ENCODE measurements at regions of chr16 and their contacts with region 1.

Region 1: GRCh38 chr16:27639561-27640276 is 89.8 kb downstream of the KATNIP start:
- DNase-seq: peak; percentile 10
- H3K4me3 ChIP-seq: no peak overlapping the region
- CTCF ChIP-seq: peak; percentile 79

Region 2: DNA sequence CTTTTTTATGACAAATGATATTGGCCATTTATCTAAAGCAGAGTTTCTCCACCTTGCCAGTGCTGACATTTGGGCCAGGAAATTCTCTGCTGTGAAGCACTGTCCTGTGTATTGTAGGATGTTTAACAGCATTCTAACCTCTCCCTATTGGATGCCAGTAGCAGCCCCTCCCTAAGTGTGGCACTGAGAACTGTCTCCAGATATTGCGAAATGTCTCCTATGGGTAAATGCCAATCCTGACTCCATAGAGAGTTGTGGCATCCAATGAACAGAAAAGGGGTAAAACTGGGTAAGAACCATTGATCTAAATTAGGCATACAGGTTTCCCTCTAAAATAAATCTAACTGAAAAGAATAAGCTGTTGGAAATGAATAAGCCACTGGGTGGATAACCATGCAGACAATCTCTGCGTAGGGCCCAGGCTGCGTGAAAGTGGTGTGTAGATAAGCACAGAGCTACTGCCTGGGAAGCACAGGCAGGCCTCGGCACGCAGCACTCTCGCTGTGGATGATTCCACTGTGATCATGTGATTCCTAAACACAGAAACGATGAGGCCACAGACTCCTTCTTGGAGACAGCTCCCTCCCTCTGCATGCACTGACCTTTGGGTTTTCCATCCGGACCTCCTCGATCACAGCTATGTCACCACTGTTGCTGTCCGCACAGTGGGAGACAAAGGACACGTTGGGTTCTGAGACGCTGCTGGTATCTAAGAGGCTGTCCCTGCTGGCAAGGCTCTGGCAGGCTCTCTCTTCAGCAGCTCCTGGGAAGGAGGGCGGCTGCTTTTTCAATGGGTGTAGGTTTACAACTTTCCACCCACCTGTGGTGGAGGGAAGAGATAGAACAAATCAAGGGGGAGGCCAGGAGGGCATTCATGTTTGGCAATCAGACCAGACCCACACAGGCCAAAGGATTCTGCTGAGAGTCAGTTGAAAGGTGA is 134.2 kb before region 1 on chr16:
- CTCF ChIA-PET with region 1: no interaction called
- POLR2A ChIA-PET with region 1: no interaction called
- DNase-seq: no peak
- H3K4me3 ChIP-seq: no peak overlapping the region
- CTCF ChIP-seq: no peak

Region 3: GRCh38 chr16:27591838-27592237 is 47.9 kb before region 1 on chr16:
- CTCF ChIA-PET with region 1: interaction called, 10 read pairs
- POLR2A ChIA-PET with region 1: no interaction called
- DNase-seq: no peak
- H3K4me3 ChIP-seq: no peak overlapping the region
- CTCF ChIP-seq: no peak

Region 4: DNA sequence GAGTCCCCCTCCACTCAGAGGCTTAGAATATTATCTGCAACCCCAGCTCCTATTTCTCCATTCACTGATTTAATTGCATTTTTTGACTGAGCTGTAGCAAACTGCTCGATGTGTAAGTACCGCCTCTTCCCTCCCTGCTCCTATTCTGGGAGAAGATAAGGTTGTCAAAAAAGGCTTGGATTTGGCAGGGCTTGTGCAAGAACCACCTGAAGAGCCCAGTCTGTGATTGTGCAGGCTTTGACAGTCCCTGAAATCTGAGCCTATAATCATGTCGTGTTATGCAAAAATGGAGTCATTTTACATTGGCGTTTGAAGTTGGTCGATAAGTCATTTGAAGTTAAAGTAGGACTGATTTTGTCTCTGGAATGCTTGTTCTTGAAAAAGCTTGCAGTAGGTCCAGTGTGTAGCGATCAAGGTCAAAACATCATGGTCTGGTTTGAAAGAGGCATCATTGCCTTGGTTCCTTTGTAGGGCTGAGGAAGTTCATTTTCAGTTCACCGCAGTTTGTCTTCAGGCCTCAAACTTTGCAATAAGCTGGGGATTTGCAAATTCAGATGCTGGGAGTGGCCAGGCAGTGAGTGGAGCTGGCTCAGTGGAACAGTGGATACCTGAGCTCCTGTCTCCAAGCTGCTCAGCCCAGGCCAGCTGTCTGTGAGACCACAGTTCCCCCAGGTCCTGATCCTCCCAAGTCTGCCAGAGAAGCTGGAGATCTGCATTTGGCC is 21.0 kb before region 1 on chr16:
- CTCF ChIA-PET with region 1: interaction called, 13 read pairs
- POLR2A ChIA-PET with region 1: no interaction called
- DNase-seq: no peak
- H3K4me3 ChIP-seq: no peak overlapping the region
- CTCF ChIP-seq: no peak

Region 5: DNA sequence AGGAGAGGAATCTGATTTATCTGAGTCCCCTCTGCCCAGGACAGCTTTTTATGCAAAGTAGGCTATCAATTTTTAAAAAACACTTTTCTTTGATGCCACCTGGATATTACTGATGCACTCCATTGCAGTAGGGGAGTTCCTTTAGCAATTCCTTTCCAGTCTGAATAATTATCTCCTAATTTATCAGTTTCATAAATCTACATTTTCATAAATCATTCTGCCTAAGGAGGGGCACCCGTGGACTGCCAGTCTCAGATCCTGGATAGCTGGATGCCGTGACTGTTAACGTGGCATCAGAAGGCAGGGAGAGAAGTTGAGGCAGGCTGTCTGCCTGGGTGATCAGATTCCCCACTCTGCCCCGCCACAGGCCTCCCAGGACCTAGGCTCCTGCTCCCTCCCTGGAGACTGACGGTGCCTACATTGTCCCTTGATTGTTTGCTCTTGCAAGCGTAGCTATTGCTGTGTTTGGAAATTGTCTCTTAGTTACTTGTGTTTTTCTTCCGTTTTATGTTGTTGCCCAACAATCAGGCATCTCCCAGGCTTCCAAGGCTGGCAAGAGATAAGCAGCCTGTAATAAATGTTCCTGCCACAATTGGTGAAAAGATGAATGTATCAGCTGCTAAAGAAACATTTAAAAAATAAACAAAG is 14.5 kb before region 1 on chr16:
- CTCF ChIA-PET with region 1: interaction called, 67 read pairs
- POLR2A ChIA-PET with region 1: no interaction called
- DNase-seq: no peak
- H3K4me3 ChIP-seq: no peak overlapping the region
- CTCF ChIP-seq: no peak

Region 6: GRCh38 chr16:27650073-27650701 is 10.5 kb after region 1 on chr16:
- CTCF ChIA-PET with region 1: interaction called, 12 read pairs
- POLR2A ChIA-PET with region 1: no interaction called
- DNase-seq: no peak
- H3K4me3 ChIP-seq: no peak overlapping the region
- CTCF ChIP-seq: no peak

Region 7: GRCh38 chr16:27657811-27658210 is 18.1 kb after region 1 on chr16:
- CTCF ChIA-PET with region 1: interaction called, 12 read pairs
- POLR2A ChIA-PET with region 1: no interaction called
- DNase-seq: no peak
- H3K4me3 ChIP-seq: no peak overlapping the region
- CTCF ChIP-seq: no peak